A549 (cell line): ENCODE measurements at regions of chr9 and their contacts with region 1.

Region 1: DNA sequence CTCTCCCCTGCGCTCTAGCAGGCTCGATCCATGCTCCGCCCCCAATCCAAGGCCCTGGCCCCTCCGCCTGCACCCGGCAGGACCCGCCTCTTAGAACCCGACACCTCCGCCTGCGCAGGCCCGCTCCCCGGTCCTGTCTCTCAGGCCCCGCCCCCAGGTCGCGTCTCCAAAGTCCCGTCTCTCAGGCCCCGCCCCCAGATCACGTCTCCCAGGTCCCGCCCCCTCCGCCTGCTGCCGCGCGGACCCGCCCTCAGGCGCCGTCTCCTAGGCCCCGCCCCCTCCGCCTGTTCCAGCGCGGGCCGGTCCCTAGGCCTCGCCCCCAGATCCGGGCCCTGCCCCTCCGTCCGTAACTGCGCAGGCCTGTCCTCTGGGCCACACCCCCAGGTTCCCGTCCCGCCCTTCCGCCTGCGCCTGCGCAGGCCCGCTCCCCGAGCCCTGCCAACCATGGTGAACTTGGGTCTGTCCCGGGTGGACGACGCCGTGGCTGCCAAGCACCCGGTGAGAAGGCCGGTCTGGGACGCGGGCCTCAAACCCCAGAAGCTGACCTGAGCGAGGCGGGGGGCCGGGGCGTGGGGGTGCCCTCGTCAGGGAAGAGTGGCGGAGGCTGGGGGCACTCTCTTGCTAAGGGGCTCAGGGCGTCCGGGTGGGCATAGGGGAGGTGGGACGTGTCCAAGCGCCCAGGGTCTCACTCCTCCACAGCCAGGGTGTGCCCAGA is at the start of gene TMEM141:
- DNase-seq: peak; percentile 90 to 100
- ATAC-seq: peak; percentile 85 to 90
- H3K4me3 ChIP-seq: peak within 1 kb of the TSS; percentile 88
- H3K27ac ChIP-seq: peak within 1 kb of the TSS; percentile 91 to 94
- H3K4me1 ChIP-seq: peaks cover 45% of the 10 kb centered on the region
- CTCF ChIP-seq: no peak
- EP300 ChIP-seq: no peak
- POLR2A ChIP-seq: peak; percentile 75
- RAD21 ChIP-seq: no peak
- polyA plus RNA-seq, gene TMEM141: 64.5 and 78.0 TPM in 2 replicates

Region 2: GRCh38 chr9:136777359-136777758 is 13.7 kb before region 1 on chr9:
- CTCF ChIA-PET with region 1: interaction called, 625 read pairs
- POLR2A ChIA-PET with region 1: no interaction called
- DNase-seq: no peak
- ATAC-seq: no peak
- H3K4me3 ChIP-seq: no peak overlapping the region
- H3K27ac ChIP-seq: no peak overlapping the region
- H3K4me1 ChIP-seq: peaks cover 9% of the 10 kb centered on the region; the same call in 2 of the 3 replicates
- CTCF ChIP-seq: no peak
- EP300 ChIP-seq: no peak
- POLR2A ChIP-seq: no peak
- RAD21 ChIP-seq: no peak

Region 3: DNA sequence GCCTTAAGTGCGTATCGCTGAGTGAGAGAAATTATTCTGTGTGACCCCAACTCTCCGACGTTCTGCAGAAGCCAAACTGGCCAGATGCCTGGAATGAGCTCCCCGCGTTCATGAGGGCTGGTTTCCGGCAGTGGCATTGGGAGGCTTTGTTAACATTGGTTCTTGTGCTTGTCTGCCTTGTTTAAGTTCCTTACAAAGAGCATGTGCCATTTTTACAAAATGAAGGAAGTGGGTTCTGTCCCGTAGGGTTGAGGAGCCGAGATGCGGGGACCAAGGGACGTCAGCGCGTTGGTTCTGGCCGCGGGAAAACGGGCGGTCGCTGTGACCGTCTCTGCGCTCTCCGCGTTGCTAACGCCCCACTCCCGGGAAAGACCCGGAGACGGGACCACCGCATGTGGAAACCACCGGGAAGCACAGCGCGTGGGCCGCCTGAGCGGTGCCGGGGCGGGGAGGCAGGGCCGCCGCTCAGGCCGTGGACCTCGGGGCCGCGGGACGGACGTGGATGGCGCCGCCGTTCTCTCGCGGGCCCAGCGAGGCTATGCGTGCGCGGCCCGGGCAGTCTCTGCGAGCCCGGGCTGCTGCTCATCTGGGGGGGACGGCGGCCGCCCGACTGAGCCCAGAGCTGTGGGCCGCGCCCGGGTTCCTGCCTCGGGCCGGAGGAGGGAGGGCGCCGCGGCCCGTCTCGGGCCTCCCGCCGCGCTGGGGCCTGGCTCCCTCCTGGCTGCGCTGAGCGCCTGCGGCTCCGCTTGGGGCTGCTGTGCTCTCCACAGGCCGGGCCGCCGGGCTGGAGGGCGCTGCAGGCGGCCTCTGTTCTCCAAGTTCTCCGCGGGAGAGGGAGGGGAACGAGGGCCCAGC is 30.1 kb after region 1 on chr9:
- CTCF ChIA-PET with region 1: interaction called, 11 read pairs
- POLR2A ChIA-PET with region 1: no interaction called
- DNase-seq: no peak
- ATAC-seq: no peak
- H3K4me3 ChIP-seq: no peak overlapping the region
- H3K27ac ChIP-seq: no peak overlapping the region
- H3K4me1 ChIP-seq: no peaks in the 10 kb centered on the region
- CTCF ChIP-seq: no peak
- EP300 ChIP-seq: no peak
- POLR2A ChIP-seq: no peak
- RAD21 ChIP-seq: no peak

Region 4: DNA sequence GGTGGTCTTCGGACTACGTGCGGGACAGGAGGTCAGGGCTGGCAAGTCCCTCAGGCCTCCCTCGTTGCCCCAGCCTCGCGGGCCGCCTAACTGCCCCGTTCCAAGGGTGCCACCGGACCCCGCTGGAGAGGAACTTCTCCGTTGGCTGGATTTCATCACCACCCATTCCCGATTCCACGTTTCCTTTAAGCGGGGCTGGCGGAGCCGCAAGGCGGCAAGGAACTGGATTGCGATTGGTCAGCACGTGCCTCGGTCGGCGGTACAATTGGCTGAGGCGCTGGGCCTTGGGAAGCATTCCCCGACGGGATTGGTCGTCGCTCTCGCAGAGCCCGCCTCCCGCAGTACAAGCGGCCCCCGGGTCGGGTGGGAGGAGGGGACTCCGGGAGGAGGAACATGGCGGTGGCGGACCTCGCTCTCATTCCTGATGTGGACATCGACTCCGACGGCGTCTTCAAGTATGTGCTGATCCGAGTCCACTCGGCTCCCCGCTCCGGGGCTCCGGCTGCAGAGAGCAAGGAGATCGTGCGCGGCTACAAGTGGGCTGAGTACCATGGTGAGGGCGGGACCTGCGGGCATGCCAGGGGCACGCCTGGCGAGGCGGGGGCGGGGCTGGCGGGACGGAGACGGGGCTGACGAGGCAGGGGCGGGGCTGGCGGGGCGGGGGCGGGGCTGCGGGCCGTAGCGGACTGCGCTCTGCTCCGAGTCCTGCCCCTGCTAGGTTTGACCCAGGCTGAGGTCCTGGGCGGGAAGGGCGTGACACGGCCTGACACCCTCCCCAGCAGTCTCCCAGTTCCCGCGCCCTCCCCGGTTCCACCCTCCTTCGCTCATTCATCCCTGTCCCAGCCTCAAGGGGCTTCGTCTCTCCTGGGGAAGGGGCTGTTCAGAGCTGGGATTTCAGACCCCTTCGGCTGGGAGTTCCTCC is 58.2 kb after region 1 on chr9 and contains the start of gene PHPT1:
- CTCF ChIA-PET with region 1: interaction called, 30 read pairs
- POLR2A ChIA-PET with region 1: interaction called, 7 read pairs
- DNase-seq: peak; percentile 99 to 100
- ATAC-seq: peak; percentile 53 to 80
- H3K4me3 ChIP-seq: peak within 1 kb of the TSS; percentile 87
- H3K27ac ChIP-seq: peak within 1 kb of the TSS; percentile 96 to 97
- H3K4me1 ChIP-seq: peaks cover 22% of the 10 kb centered on the region
- CTCF ChIP-seq: no peak
- EP300 ChIP-seq: no peak
- POLR2A ChIP-seq: peak; percentile 72
- RAD21 ChIP-seq: 0 out of 5 replicates have a peak, but pooled peaks of 1 of the 2 experiments have one; percentile 17
- polyA plus RNA-seq, gene PHPT1: 104 and 123 TPM in 2 replicates